B cell (primary cell): ENCODE measurements at regions of chr1 and their contacts with region 1.

Region 1: DNA sequence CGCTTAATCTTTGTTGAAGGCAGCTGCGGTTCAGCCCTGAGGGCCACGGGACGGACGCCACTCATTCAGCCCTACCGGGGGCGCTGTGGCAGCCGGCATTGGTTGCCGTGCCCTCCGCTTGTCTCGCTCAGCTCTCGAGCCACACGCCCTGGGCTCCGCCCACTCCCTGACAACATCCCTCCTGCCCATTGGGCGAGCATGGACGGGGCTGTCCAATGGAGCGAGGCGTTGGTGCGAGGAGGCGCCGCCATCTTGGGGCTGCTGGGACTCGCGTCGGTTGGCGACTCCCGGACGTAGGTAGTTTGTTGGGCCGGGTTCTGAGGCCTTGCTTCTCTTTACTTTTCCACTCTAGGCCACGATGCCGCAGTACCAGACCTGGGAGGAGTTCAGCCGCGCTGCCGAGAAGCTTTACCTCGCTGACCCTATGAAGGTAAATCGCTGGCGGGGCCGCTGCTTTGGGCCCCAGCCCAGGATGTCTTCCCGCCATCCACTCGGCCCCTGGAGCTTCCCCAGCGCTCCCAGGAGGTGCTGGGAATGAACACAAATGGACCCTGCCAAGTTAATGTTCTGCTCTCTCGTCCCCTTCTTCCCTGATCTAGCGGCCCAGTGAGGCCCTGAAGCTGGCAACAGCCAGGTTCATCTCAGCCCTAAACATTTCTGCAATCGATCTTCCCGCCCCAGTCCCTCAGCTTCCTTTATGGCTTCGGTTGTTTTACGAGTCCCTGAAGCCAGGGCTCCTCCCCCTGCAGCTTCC is at the start of gene SRP9:
- DNase-seq: peak; percentile 99
- ATAC-seq: peak; percentile 97
- H3K4me3 ChIP-seq: peak within 1 kb of the TSS; percentile 71 to 97 (median 92)
- H3K4me3 Mint-ChIP-seq: no peak within 1 kb of the TSS
- H3K27ac ChIP-seq: peak within 1 kb of the TSS; percentile 96 to 98
- H3K27ac Mint-ChIP-seq: no peak within 1 kb of the TSS
- H3K4me1 ChIP-seq: peaks cover 33 to 39% of the 10 kb centered on the region in 2 donors
- H3K4me1 Mint-ChIP-seq: peaks cover 21% of the 10 kb centered on the region
- H3K27me3 ChIP-seq: no peaks in the 10 kb centered on the region
- H3K27me3 Mint-ChIP-seq: no peaks in the 10 kb centered on the region
- CTCF ChIP-seq: peak; percentile 89
- total RNA-seq, gene SRP9: 104 and 117 TPM in 2 replicates

Region 2: DNA sequence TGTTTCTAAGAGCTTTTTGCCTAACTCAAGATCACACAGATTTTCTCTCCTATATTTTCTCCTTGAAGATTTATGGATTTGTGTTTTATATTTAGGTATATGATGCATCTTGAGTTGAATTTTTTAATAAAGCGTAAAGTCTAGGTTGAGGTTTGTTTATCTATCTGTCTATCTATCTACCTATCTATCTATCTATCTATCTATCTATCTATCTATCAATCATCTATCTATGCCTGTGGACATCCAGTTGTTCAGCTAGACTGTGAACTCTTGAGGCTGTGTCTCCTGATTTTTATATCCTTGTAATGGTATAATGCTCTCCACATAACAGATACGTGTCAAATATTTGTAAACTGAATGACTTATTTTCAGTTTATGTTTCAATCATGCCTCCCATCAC is 728.2 kb before region 1 on chr1:
- CTCF ChIA-PET with region 1: no interaction called
- POLR2A ChIA-PET with region 1: no interaction called
- intact Hi-C with region 1: no loop called
- DNase-seq: no peak
- ATAC-seq: no peak
- H3K4me3 ChIP-seq: no peak overlapping the region
- H3K4me3 Mint-ChIP-seq: no peak overlapping the region
- H3K27ac ChIP-seq: no peak overlapping the region
- H3K27ac Mint-ChIP-seq: no peak overlapping the region
- H3K4me1 ChIP-seq: no peaks in the 10 kb centered on the region
- H3K4me1 Mint-ChIP-seq: no peaks in the 10 kb centered on the region
- H3K27me3 ChIP-seq: no peaks in the 10 kb centered on the region
- H3K27me3 Mint-ChIP-seq: no peaks in the 10 kb centered on the region
- CTCF ChIP-seq: no peak

Region 3: GRCh38 chr1:225474986-225475820 is 302.6 kb before region 1 on chr1:
- CTCF ChIA-PET with region 1: interaction called, 22 read pairs
- POLR2A ChIA-PET with region 1: interaction called, 13 read pairs
- intact Hi-C with region 1: loop called (anchors 1 kb)
- DNase-seq: peak; percentile 84
- ATAC-seq: peak; percentile 92
- H3K4me3 ChIP-seq: no peak overlapping the region
- H3K4me3 Mint-ChIP-seq: no peak overlapping the region
- H3K27ac ChIP-seq: no peak overlapping the region
- H3K27ac Mint-ChIP-seq: peak overlapping the region; percentile 32
- H3K4me1 ChIP-seq: peaks cover 32 to 44% of the 10 kb centered on the region in 2 donors
- H3K4me1 Mint-ChIP-seq: peaks cover 38% of the 10 kb centered on the region
- H3K27me3 ChIP-seq: no peaks in the 10 kb centered on the region
- H3K27me3 Mint-ChIP-seq: no peaks in the 10 kb centered on the region
- CTCF ChIP-seq: peak; percentile 100

Region 4: DNA sequence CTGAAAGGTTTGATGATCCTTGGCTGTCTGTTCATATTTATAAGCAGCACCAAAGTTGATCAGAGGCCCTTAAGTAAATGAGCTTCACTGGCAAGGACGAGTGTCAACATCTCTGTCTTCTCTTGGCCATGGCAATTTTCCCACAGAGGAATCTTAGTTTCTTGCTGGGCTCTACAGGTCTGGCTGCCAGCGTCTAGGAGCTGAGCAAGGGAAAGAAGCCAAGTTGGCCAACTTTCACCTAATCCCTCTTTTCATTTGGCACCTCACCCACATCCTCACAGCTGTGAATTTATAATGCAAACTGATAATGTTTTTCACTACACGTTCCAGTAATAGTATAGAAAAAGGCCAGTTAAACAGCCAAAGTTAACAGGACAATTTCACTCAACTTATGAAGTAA is 250.9 kb before region 1 on chr1:
- CTCF ChIA-PET with region 1: no interaction called
- POLR2A ChIA-PET with region 1: no interaction called
- intact Hi-C with region 1: no loop called
- DNase-seq: no peak
- ATAC-seq: no peak
- H3K4me3 ChIP-seq: no peak overlapping the region
- H3K4me3 Mint-ChIP-seq: no peak overlapping the region
- H3K27ac ChIP-seq: no peak overlapping the region
- H3K27ac Mint-ChIP-seq: no peak overlapping the region
- H3K4me1 ChIP-seq: no peaks in the 10 kb centered on the region
- H3K4me1 Mint-ChIP-seq: no peaks in the 10 kb centered on the region
- H3K27me3 ChIP-seq: no peaks in the 10 kb centered on the region
- H3K27me3 Mint-ChIP-seq: peaks cover 5% of the 10 kb centered on the region
- CTCF ChIP-seq: no peak

Region 5: DNA sequence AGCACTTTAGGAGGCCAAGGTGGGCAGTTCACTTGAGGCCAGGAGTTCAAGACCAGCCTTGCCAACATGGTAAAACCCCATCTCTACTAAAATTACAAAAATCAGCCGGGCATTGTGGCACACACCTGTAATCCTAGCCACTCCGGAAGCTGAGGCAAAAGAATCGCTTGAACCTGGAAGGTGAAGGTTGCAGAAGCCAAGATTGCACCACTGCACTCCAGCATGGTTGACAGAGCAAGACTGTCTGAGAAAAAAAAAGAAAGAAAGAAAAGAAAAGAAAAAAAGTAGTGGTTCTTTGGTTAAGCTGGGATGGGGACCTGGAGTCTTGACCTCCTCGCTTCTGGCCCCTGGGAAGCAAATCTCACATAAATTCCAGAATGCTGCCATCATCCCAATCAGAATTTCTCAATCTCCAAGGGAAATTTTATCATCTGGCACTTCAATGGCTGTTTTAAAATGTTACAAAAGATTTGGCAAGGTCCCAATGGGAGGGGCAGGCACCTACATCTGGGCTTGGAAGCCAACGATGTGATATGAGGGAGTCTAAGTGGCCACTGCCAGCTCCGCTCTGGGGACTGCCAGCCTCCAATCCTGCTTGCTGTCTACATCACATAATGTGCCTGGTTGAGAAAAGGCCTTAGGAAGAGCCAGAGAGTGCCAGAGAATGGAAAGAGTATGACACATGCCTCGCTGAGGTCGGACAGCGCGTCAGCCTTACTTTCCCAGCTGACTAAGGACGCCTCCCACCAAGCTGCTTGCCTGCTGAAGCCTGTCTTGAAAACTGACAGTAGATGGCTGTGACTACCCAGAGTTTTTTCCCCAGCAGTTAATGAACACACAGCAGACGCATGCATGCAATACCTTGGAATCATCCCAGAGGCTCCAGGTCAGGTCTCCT is 42.3 kb before region 1 on chr1:
- CTCF ChIA-PET with region 1: no interaction called
- POLR2A ChIA-PET with region 1: no interaction called
- intact Hi-C with region 1: no loop called
- DNase-seq: no peak
- ATAC-seq: no peak
- H3K4me3 ChIP-seq: no peak overlapping the region
- H3K4me3 Mint-ChIP-seq: no peak overlapping the region
- H3K27ac ChIP-seq: no peak overlapping the region
- H3K27ac Mint-ChIP-seq: no peak overlapping the region
- H3K4me1 ChIP-seq: no peaks in the 10 kb centered on the region
- H3K4me1 Mint-ChIP-seq: no peaks in the 10 kb centered on the region
- H3K27me3 ChIP-seq: no peaks in the 10 kb centered on the region
- H3K27me3 Mint-ChIP-seq: peaks cover 3% of the 10 kb centered on the region
- CTCF ChIP-seq: no peak

Region 6: GRCh38 chr1:225809842-225810578 is 32.2 kb after region 1 on chr1 and contains the start of gene EPHX1:
- CTCF ChIA-PET with region 1: interaction called, 3 read pairs
- POLR2A ChIA-PET with region 1: interaction called, 5 read pairs
- intact Hi-C with region 1: loop called (anchors 5 kb)
- DNase-seq: peak; percentile 63
- ATAC-seq: peak; percentile 85
- H3K4me3 ChIP-seq: peak within 1 kb of the TSS; percentile 38 to 65 (median 50)
- H3K4me3 Mint-ChIP-seq: peak within 1 kb of the TSS; percentile 88
- H3K27ac ChIP-seq: no peak within 1 kb of the TSS
- H3K27ac Mint-ChIP-seq: peak within 1 kb of the TSS; percentile 65
- H3K4me1 ChIP-seq: peaks cover 5 to 14% of the 10 kb centered on the region in 2 donors
- H3K4me1 Mint-ChIP-seq: peaks cover 11% of the 10 kb centered on the region
- H3K27me3 ChIP-seq: peaks cover 0 to 6% (median 3%) of the 10 kb centered on the region in 4 experiments
- H3K27me3 Mint-ChIP-seq: peaks cover 11% of the 10 kb centered on the region
- CTCF ChIP-seq: no peak
- total RNA-seq, gene EPHX1: 3.7 and 4.2 TPM in 2 replicates

Region 7: GRCh38 chr1:225896937-225897549 is 119.3 kb after region 1 on chr1:
- CTCF ChIA-PET with region 1: interaction called, 4 read pairs
- POLR2A ChIA-PET with region 1: interaction called, 4 read pairs
- intact Hi-C with region 1: loop called (anchors 1 kb)
- DNase-seq: peak; percentile 89
- ATAC-seq: peak; percentile 98
- H3K4me3 ChIP-seq: peak overlapping the region in 1 of 5 experiments; percentile 26
- H3K4me3 Mint-ChIP-seq: peak overlapping the region; percentile 71
- H3K27ac ChIP-seq: peak overlapping the region; percentile 86 to 97
- H3K27ac Mint-ChIP-seq: peak overlapping the region; percentile 98
- H3K4me1 ChIP-seq: peaks cover 34 to 36% of the 10 kb centered on the region in 2 donors
- H3K4me1 Mint-ChIP-seq: peaks cover 36% of the 10 kb centered on the region
- H3K27me3 ChIP-seq: no peaks in the 10 kb centered on the region
- H3K27me3 Mint-ChIP-seq: no peaks in the 10 kb centered on the region
- CTCF ChIP-seq: no peak

Region 8: GRCh38 chr1:225977937-225978748 is 200.4 kb after region 1 on chr1:
- CTCF ChIA-PET with region 1: interaction called, 15 read pairs
- POLR2A ChIA-PET with region 1: no interaction called
- intact Hi-C with region 1: loop called (anchors 2 kb)
- DNase-seq: peak; percentile 71
- ATAC-seq: peak; percentile 80
- H3K4me3 ChIP-seq: no peak overlapping the region
- H3K4me3 Mint-ChIP-seq: peak overlapping the region; percentile 67
- H3K27ac ChIP-seq: peak overlapping the region; percentile 27 to 38
- H3K27ac Mint-ChIP-seq: peak overlapping the region; percentile 83
- H3K4me1 ChIP-seq: peaks cover 16 to 23% of the 10 kb centered on the region in 2 donors
- H3K4me1 Mint-ChIP-seq: peaks cover 25% of the 10 kb centered on the region
- H3K27me3 ChIP-seq: no peaks in the 10 kb centered on the region
- H3K27me3 Mint-ChIP-seq: no peaks in the 10 kb centered on the region
- CTCF ChIP-seq: peak; percentile 5

Region 9: DNA sequence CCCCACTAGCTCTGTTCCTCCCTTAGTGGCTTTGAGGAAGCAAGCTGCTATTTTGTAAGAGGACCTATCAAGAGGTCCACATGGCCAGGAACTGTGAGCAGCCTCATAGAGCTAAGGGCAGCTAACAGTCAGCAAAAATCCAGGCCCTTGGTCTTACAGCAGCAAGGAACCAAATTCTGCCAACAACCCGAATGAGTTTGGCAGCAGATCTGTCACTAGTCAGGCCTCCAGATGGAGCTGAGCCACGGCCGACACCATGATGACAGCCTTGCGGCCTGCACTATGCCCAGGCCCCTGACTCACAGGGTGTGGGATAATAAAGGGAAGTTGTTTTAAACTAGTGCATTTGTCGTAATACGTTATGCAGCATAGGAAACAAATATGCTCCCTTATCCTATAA is 256.7 kb after region 1 on chr1:
- CTCF ChIA-PET with region 1: no interaction called
- POLR2A ChIA-PET with region 1: no interaction called
- intact Hi-C with region 1: no loop called
- DNase-seq: peak; percentile 35
- ATAC-seq: peak; percentile 51
- H3K4me3 ChIP-seq: no peak overlapping the region
- H3K4me3 Mint-ChIP-seq: no peak overlapping the region
- H3K27ac ChIP-seq: no peak overlapping the region
- H3K27ac Mint-ChIP-seq: no peak overlapping the region
- H3K4me1 ChIP-seq: peaks cover 21 to 28% of the 10 kb centered on the region in 2 donors
- H3K4me1 Mint-ChIP-seq: peaks cover 29% of the 10 kb centered on the region
- H3K27me3 ChIP-seq: no peaks in the 10 kb centered on the region
- H3K27me3 Mint-ChIP-seq: no peaks in the 10 kb centered on the region
- CTCF ChIP-seq: no peak

Region 10: GRCh38 chr1:226062558-226063223 is 284.9 kb after region 1 on chr1 and contains the start of gene H3-3A:
- CTCF ChIA-PET with region 1: interaction called, 3 read pairs
- POLR2A ChIA-PET with region 1: no interaction called
- intact Hi-C with region 1: loop called (anchors 10 kb)
- DNase-seq: peak; percentile 98
- ATAC-seq: peak; percentile 81
- H3K4me3 ChIP-seq: peak within 1 kb of the TSS; percentile 86 to 100 (median 96)
- H3K4me3 Mint-ChIP-seq: peak within 1 kb of the TSS; percentile 100
- H3K27ac ChIP-seq: peak within 1 kb of the TSS; percentile 93 to 96
- H3K27ac Mint-ChIP-seq: peak within 1 kb of the TSS; percentile 99
- H3K4me1 ChIP-seq: peaks cover 33 to 34% of the 10 kb centered on the region in 2 donors
- H3K4me1 Mint-ChIP-seq: peaks cover 46% of the 10 kb centered on the region
- H3K27me3 ChIP-seq: no peaks in the 10 kb centered on the region
- H3K27me3 Mint-ChIP-seq: no peaks in the 10 kb centered on the region
- CTCF ChIP-seq: no peak
- total RNA-seq, gene H3-3A: 519 and 561 TPM in 2 replicates